Vagina (tissue), 2 donors: ENCODE measurements at regions of chr3 and their contacts with region 1.

Region 1: DNA sequence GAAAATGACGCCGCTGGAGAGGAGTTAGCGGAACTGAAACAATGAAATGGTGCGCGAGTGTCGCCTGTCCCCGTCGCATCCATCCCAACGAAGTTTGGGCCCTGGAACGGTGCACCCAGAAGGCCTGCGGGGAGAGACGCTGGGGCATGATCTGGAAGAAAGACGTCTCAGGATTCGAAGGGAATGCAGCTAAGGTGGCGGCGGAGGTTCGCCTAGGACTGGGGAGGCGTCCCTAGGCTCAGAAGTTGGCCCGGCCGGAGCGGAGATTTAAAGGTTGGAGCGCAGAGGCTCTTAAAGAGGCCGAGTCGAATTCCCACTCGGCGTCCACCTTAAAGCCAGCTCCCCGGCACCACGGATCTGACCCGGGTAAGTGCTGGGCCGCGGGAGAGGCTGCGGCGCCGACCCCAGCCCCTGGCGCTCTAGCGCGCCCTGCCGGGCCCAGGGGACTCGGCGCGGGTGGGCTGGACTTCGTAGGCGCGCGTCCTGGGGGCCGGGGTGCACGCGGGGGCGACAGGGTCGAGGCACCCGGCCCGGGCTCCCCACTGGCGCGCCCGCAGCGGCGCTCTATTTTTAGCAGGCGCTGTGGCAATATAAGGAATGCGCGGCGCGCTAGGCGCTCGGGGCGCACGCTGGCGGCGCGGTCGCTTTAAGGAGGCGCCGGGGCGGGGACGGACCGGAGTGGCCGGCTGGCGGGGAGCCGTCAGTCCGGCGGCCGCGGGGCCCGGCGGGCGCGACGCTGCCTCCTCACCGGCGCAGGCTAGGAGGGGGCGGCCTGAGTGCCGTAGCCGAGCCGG is at the start of gene MRAS:
- DNase-seq: no peak
- H3K4me3 ChIP-seq: peak within 1 kb of the TSS; percentile 57 to 81
- H3K27ac ChIP-seq: peak within 1 kb of the TSS; percentile 91
- H3K4me1 ChIP-seq: peaks cover 11% of the 10 kb centered on the region
- H3K27me3 ChIP-seq: no peaks in the 10 kb centered on the region
- CTCF ChIP-seq: peak; percentile 12 to 26 (median 21)
- POLR2A ChIP-seq: peak in 1 of 2 donors; percentile 47
- total RNA-seq, gene MRAS: 26.8 TPM

Region 2: DNA sequence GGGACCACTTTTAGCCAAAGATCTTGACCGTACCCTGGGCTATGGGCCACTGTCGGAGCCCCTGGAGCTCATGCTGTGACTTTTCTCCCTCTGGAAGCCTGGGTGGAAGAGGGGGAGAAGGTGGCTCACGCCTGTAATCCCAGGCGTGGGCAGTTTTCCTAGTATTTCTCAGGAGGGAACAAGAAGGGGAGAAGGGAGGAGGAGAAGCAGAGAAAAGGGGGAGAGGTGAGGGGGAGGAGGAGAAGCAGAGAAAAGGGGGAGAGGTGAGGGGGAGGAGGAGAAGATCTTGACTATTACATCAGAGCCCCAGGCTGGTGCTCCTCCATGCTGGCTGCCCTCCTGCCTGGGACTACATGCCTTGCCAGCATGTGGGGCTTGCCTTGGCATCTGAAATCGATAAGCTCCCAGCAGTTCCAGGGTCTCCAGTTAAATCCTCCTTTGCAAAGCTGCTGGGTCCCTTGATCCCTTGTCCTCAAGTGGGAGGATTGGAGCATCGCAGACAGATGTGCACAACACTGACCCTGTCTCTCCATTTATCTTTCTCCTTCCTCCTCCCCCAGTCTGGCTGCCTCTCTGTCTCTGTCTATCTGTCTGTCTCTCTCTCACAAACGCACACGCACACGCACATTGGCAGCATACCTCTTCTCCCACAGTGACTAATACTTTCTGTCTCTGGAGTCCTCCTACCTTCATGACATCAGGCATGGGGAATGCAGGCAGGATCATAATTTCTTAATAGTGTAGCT is 41.9 kb after region 1 on chr3:
- intact Hi-C with region 1: loop called (anchors 5 kb)
- DNase-seq: no peak
- H3K4me3 ChIP-seq: peak overlapping the region in 1 of 2 donors; percentile 0
- H3K27ac ChIP-seq: no peak overlapping the region
- H3K4me1 ChIP-seq: peaks cover 18% of the 10 kb centered on the region
- H3K27me3 ChIP-seq: no peaks in the 10 kb centered on the region
- CTCF ChIP-seq: no peak
- POLR2A ChIP-seq: no peak